ENCODE measurements at regions of chr2 and their contacts with region 1.

Region 1: DNA sequence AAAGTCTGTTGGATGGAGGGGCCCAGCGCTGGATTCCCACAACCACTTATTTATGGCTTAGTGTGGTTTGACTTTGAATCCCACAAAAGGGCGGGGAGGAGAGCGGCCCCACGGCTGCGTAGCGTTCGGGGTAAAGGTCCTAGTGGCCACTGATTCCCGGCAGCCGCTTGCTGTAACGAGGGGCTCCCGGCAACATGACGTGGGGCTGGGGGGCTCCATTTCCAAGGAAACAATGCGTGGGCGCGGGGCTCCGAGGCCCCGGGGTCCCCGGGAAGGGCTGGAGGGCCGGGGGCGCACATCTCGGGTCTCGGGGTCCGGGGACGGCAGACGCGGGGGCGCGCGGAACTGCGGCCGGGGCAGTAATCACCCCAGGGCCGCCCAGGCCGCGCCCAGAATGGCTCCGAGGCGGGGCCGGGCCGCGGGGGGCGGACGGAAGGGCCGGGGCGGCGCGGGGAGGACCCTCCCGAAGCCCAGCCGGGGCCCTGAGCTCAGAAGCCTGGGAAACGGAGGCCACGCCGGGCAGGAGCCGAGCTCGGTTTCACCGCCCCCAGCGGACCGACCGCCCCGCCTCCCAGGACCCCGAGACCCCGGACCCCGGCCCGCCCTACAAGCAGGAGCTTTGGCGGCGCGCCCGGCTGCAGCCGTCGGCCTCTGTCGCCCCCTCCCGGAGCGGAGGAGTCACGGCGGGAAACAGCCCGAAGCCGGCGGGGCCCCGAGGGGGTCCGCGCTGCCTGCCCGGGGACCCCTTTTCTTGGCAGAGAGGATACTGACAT is 11.9 kb upstream of the MLPH start:
- DNase-seq: peak; percentile 91
- H3K4me3 ChIP-seq: peak overlapping the region; percentile 77
- H3K27ac ChIP-seq: peak overlapping the region; percentile 90 to 92
- H3K4me1 ChIP-seq: peaks cover 28% of the 10 kb centered on the region
- H3K27me3 ChIP-seq: no peaks in the 10 kb centered on the region
- CTCF ChIP-seq: peak; percentile 83 to 93 (median 85)
- POLR2A ChIP-seq: no peak

Region 2: GRCh38 chr2:237122214-237122666 is 352.9 kb before region 1 on chr2:
- intact Hi-C with region 1: loop called (anchors 10 kb)
- DNase-seq: peak; percentile 65
- H3K4me3 ChIP-seq: no peak overlapping the region
- H3K27ac ChIP-seq: no peak overlapping the region
- H3K4me1 ChIP-seq: no peaks in the 10 kb centered on the region
- H3K27me3 ChIP-seq: no peaks in the 10 kb centered on the region
- CTCF ChIP-seq: peak; percentile 24 to 46 (median 44)
- POLR2A ChIP-seq: no peak

Region 3: DNA sequence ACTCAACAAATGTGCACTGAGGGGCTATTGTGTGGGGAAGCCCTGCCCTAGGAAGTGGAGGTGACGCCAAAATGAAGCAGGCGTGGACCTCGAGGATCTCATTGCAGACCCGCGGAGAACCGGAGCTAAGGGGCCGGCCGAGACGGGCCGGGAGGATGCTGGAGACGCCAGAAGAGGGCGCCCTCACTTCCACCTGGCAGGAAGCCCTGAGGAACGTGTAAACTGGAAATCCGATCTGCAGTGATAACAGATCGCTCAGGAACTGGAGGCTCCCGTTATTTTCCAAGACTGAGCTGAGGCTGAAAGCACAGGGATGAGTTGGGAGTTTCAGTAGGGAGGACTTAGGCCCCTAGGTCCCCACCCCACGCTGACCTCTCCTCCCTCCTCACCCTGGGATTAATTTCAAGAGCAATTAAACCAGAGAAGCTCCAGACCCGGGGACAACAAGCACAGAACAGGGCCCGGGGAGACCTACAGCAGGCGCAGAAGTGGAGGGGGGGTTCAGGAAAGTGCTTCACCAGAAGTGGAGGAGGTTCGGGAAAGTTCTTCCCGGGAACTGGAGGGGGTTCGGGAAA is 53.5 kb before region 1 on chr2:
- intact Hi-C with region 1: loop called (anchors 5 kb)
- DNase-seq: peak; percentile 79
- H3K4me3 ChIP-seq: peak overlapping the region in 1 of 2 donors; percentile 26
- H3K27ac ChIP-seq: no peak overlapping the region
- H3K4me1 ChIP-seq: peaks cover 11% of the 10 kb centered on the region
- H3K27me3 ChIP-seq: no peaks in the 10 kb centered on the region
- CTCF ChIP-seq: peak; percentile 48 to 70 (median 63)
- POLR2A ChIP-seq: no peak